T-cell (primary cell): ENCODE measurements at regions of chr18 and their contacts with region 1.

Region 1: DNA sequence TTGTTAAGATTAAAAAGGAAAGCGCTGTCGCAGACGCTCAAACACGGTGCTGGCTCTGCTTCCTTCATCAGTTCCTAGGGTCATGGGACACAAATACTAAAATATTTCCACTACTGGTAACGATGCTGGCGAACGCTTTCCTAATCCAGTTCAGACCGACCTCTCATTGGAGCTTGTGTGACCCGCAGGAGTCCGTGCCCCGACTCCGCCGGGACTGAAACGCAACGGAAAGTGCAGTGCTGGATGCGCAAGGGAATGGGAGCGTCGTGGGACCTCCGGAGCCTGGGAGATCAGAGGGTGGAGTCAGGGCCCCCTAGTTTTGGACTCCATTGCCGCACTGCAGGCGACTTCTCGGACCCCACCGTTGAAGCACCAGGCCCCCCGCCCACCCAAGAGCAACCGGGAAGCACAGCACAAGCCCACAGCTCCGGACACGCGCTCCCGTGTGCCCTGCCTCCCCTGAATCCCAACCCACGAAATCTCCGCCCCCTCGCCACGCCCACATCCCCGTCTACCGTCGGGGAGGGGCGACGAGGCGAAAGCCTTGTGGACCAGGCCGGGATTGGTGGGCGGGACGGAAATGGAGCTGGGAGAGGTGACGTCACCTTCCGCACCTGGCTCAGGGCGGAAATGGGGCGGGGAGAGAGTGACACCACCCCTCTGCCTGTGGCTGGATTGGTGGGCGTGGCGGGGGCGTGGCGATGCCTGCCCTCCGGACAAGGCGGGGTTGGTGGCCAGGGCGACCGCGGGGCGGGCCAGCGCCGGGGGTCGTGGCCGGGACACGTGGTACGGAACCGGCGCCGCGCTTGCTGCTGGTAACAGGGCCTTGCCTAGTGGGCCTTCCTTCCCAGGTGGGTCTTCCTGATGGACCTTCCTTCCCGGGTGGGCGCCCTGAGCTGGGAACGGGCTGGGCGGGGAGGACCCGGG is at the start of gene CNDP2:
- DNase-seq: peak; percentile 90 to 99 (median 95)
- ATAC-seq: peak; percentile 74 to 77 (median 76)
- H3K4me3 ChIP-seq: peak within 1 kb of the TSS; percentile 76 to 78
- H3K4me3 Mint-ChIP-seq: peak within 1 kb of the TSS; percentile 95 to 98 (median 96)
- H3K27ac ChIP-seq: peak within 1 kb of the TSS; percentile 92
- H3K27ac Mint-ChIP-seq: peak within 1 kb of the TSS; percentile 90 to 99
- H3K4me1 ChIP-seq: peaks cover 29 to 45% of the 10 kb centered on the region in 2 experiments
- H3K4me1 Mint-ChIP-seq: peaks cover 43 to 47% (median 46%) of the 10 kb centered on the region in 3 donors
- H3K27me3 ChIP-seq: no peaks in the 10 kb centered on the region
- H3K27me3 Mint-ChIP-seq: no peaks in the 10 kb centered on the region
- total RNA-seq, gene CNDP2: 113 to 150 (median 137) TPM

Region 2: GRCh38 chr18:74196220-74197119 is 299.4 kb before region 1 on chr18:
- CTCF ChIA-PET with region 1: interaction called, 6 to 12 read pairs
- POLR2A ChIA-PET with region 1: no interaction called
- DNase-seq: peak; percentile 13 to 85 (median 40)
- ATAC-seq: peak; percentile 87 to 95 (median 90)
- H3K4me3 ChIP-seq: peak overlapping the region; percentile 31 to 42
- H3K4me3 Mint-ChIP-seq: peak overlapping the region; percentile 60 to 75 (median 67)
- H3K27ac ChIP-seq: peak overlapping the region; percentile 31
- H3K27ac Mint-ChIP-seq: peak overlapping the region; percentile 63 to 82
- H3K4me1 ChIP-seq: no peaks in the 10 kb centered on the region
- H3K4me1 Mint-ChIP-seq: peaks cover 0 to 4% (median 3%) of the 10 kb centered on the region in 3 donors
- H3K27me3 ChIP-seq: peaks cover 0 to 19% of the 10 kb centered on the region in 2 experiments
- H3K27me3 Mint-ChIP-seq: peaks cover 6 to 8% of the 10 kb centered on the region in 2 donors

Region 3: GRCh38 chr18:74342416-74343043 is 153.3 kb before region 1 on chr18:
- CTCF ChIA-PET with region 1: interaction called, 3 to 34 read pairs
- POLR2A ChIA-PET with region 1: no interaction called
- DNase-seq: peak in 16 of 35 experiments; percentile 8 to 71 (median 19)
- ATAC-seq: peak in 1 of 4 experiments; percentile 48
- H3K4me3 ChIP-seq: no peak overlapping the region
- H3K4me3 Mint-ChIP-seq: no peak overlapping the region
- H3K27ac ChIP-seq: no peak overlapping the region
- H3K27ac Mint-ChIP-seq: no peak overlapping the region
- H3K4me1 ChIP-seq: no peaks in the 10 kb centered on the region
- H3K4me1 Mint-ChIP-seq: peaks cover 0 to 2% (median 0%) of the 10 kb centered on the region in 3 donors
- H3K27me3 ChIP-seq: peaks cover 0 to 4% of the 10 kb centered on the region in 2 experiments
- H3K27me3 Mint-ChIP-seq: peaks cover 3% of the 10 kb centered on the region in 2 donors

Region 4: DNA sequence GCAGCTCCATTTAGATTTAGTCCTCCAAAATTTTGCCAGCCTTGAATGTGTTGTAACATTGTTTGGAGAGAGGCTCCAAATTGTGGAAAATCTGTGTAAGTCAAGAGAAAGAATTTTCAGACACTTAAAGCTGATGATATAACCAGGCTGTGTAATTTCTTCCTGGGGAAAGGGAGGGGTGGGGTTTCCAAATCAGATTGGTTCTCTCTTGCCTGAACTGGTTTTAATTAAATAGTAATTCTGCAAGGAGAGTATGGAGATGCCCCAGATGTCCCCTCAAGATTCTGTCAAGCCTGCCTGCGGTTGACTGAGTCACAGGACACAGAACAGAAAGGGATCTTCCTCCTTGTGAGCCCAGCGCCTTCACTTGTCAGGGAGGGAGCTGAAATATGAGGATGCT is 125.7 kb before region 1 on chr18:
- CTCF ChIA-PET with region 1: interaction called, 15 to 46 read pairs
- POLR2A ChIA-PET with region 1: interaction called, 5 read pairs
- DNase-seq: no peak
- ATAC-seq: no peak
- H3K4me3 ChIP-seq: no peak overlapping the region
- H3K4me3 Mint-ChIP-seq: peak overlapping the region in 1 of 3 donors; percentile 10
- H3K27ac ChIP-seq: no peak overlapping the region
- H3K27ac Mint-ChIP-seq: no peak overlapping the region
- H3K4me1 ChIP-seq: peaks cover 38% of the 10 kb centered on the region in 2 experiments
- H3K4me1 Mint-ChIP-seq: peaks cover 48 to 52% (median 50%) of the 10 kb centered on the region in 3 donors
- H3K27me3 ChIP-seq: no peaks in the 10 kb centered on the region
- H3K27me3 Mint-ChIP-seq: peaks cover 0 to 8% of the 10 kb centered on the region in 2 donors

Region 5: GRCh38 chr18:74551936-74552555 is 56.2 kb after region 1 on chr18:
- CTCF ChIA-PET with region 1: interaction called, 5 to 32 read pairs
- POLR2A ChIA-PET with region 1: no interaction called
- DNase-seq: peak; percentile 40 to 89 (median 66)
- ATAC-seq: peak; percentile 88 to 95 (median 92)
- H3K4me3 ChIP-seq: no peak overlapping the region
- H3K4me3 Mint-ChIP-seq: no peak overlapping the region
- H3K27ac ChIP-seq: no peak overlapping the region
- H3K27ac Mint-ChIP-seq: no peak overlapping the region
- H3K4me1 ChIP-seq: no peaks in the 10 kb centered on the region
- H3K4me1 Mint-ChIP-seq: no peaks in the 10 kb centered on the region
- H3K27me3 ChIP-seq: peaks cover 0 to 17% of the 10 kb centered on the region in 2 experiments
- H3K27me3 Mint-ChIP-seq: peaks cover 15 to 16% of the 10 kb centered on the region in 2 donors

Region 6: DNA sequence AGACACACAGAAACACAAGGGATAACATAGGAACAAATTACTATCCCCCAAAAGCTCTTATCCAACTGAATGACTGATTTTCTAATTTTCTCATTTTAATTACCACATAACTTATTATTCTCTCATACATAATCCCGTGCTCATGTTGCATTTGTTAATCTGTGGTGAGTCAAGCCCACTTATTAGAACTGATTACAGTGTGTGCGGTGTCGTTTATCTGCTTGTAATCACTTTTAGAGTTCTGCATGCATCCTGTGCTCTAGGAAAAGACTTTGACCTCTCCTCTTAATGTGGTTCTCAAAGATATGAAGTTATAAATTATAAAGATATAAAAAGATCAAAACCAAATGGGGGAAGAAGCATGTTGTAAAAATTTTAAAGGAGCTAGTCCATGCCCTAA is 68.2 kb after region 1 on chr18:
- CTCF ChIA-PET with region 1: no interaction called
- POLR2A ChIA-PET with region 1: no interaction called
- DNase-seq: no peak
- ATAC-seq: no peak
- H3K4me3 ChIP-seq: no peak overlapping the region
- H3K4me3 Mint-ChIP-seq: no peak overlapping the region
- H3K27ac ChIP-seq: no peak overlapping the region
- H3K27ac Mint-ChIP-seq: no peak overlapping the region
- H3K4me1 ChIP-seq: no peaks in the 10 kb centered on the region
- H3K4me1 Mint-ChIP-seq: no peaks in the 10 kb centered on the region
- H3K27me3 ChIP-seq: peaks cover 0 to 13% of the 10 kb centered on the region in 2 experiments
- H3K27me3 Mint-ChIP-seq: peaks cover 19% of the 10 kb centered on the region in 2 donors

Region 7: GRCh38 chr18:74702950-74703349 is 207.1 kb after region 1 on chr18:
- CTCF ChIA-PET with region 1: no interaction called
- POLR2A ChIA-PET with region 1: no interaction called
- DNase-seq: no peak
- ATAC-seq: no peak
- H3K4me3 ChIP-seq: no peak overlapping the region
- H3K4me3 Mint-ChIP-seq: no peak overlapping the region
- H3K27ac ChIP-seq: no peak overlapping the region
- H3K27ac Mint-ChIP-seq: no peak overlapping the region
- H3K4me1 ChIP-seq: no peaks in the 10 kb centered on the region
- H3K4me1 Mint-ChIP-seq: peaks cover 0 to 6% (median 0%) of the 10 kb centered on the region in 3 donors
- H3K27me3 ChIP-seq: no peaks in the 10 kb centered on the region
- H3K27me3 Mint-ChIP-seq: no peaks in the 10 kb centered on the region